ENCODE measurements at regions of chr16 and their contacts with region 1.

Region 1: DNA sequence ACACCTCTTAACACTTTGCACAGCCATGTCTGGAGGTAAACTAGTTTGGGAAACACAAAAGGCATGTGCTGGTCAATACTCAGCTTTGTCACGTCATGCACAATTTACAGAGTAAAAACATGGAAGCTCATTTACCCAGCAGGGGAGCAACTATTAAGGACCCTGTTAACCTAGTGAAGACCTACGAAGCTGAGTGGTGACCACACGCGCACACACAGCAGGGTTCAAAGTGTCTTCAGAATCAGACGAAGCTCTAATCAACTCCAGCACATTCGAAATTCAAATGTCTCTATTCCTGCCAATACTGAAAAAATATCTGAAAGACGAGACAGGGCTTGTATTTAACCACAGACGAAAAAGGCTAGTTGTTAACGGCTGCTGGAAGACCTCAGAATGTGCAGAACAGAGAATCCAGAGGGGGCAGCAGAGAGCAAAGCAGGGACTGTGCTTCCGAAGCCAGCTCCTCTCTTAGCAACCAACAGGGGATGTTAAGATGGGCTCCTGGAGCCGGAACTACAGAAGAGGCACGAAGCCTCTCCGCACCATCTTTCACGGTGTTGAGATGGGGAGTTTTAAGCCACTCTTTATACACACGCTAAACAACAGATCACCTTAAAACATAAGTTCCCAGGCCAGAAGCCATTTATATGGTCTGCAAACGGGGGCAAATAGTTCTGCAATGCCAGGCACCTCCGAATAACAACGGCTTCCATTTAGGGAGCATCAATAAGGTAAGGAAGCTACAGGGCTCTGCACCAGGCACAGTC is 45.7 kb downstream of the CMTM4 start:
- DNase-seq: peak; percentile 83
- H3K4me3 ChIP-seq: peak overlapping the region; percentile 38 to 46
- H3K27ac ChIP-seq: peak overlapping the region in 1 of 2 experiments; percentile 18; a peak in 1 of 4 replicates
- H3K4me1 ChIP-seq: peaks cover 4 to 6% of the 10 kb centered on the region in 2 experiments; a peak in 1 of 4 replicates
- H3K27me3 ChIP-seq: no peaks in the 10 kb centered on the region
- CTCF ChIP-seq: peak; percentile 94
- EP300 ChIP-seq: no peak
- RAD21 ChIP-seq: peak; percentile 71

Region 2: GRCh38 chr16:66608241-66609138 is 42.4 kb before region 1 on chr16:
- CTCF ChIA-PET with region 1: interaction called, 43 read pairs
- POLR2A ChIA-PET with region 1: no interaction called
- DNase-seq: peak; percentile 94
- H3K4me3 ChIP-seq: no peak overlapping the region; a peak in 1 of 4 replicates
- H3K27ac ChIP-seq: peak overlapping the region; percentile 36 to 38; a peak in 3 of 4 replicates
- H3K4me1 ChIP-seq: peaks cover 7 to 19% of the 10 kb centered on the region in 2 experiments; a peak in 3 of 4 replicates
- H3K27me3 ChIP-seq: no peaks in the 10 kb centered on the region
- CTCF ChIP-seq: peak; percentile 94
- EP300 ChIP-seq: no peak
- RAD21 ChIP-seq: peak; percentile 72

Region 3: DNA sequence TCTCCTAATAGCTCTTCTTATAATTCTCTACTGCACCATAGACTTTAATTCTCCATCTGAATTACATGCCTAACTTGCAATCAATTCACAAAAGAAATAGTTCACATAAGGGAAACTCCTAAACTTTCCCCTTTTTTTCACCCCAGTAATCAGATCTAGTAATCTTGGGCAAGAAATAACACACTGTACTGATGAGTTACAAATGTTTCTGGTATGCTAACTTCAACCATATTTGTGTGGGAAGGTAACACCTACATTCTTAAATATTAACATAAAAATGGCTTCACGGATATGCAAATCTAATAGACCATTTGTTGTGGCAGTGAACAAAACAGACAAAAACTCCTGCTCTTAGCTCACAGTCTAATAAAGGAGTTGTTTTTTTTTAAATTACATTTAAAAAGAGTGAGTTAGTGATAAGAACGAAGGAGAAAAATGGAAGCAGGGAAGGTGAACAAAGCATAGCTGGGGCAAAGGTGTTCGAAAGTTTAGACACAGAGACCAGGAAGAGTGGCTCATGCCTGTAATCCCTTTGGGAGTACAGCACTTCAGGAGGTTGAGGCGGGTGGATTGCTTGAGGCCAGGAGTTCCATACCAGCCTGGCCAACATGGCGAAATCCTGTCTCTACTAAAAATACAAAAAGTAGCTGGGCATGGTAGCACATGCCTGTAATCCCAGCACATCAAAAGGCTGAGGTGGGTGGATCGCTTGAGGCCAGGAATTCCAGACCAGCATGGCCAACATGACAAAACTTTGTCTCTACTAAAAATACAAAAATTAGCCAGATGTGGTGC is 11.6 kb before region 1 on chr16:
- CTCF ChIA-PET with region 1: interaction called, 66 read pairs
- POLR2A ChIA-PET with region 1: no interaction called
- DNase-seq: no peak
- H3K4me3 ChIP-seq: no peak overlapping the region
- H3K27ac ChIP-seq: no peak overlapping the region
- H3K4me1 ChIP-seq: no peaks in the 10 kb centered on the region
- H3K27me3 ChIP-seq: no peaks in the 10 kb centered on the region
- CTCF ChIP-seq: no peak
- EP300 ChIP-seq: no peak
- RAD21 ChIP-seq: no peak

Region 4: GRCh38 chr16:66696669-66697630 is 46.1 kb after region 1 on chr16 and contains the start of gene CMTM4:
- CTCF ChIA-PET with region 1: interaction called, 17 read pairs
- POLR2A ChIA-PET with region 1: no interaction called
- DNase-seq: peak; percentile 98
- H3K4me3 ChIP-seq: peak within 1 kb of the TSS; percentile 58 to 85
- H3K27ac ChIP-seq: no peak within 1 kb of the TSS
- H3K4me1 ChIP-seq: peaks cover 6 to 9% of the 10 kb centered on the region in 2 experiments; a peak in 2 of 4 replicates
- H3K27me3 ChIP-seq: no peaks in the 10 kb centered on the region
- CTCF ChIP-seq: peak; percentile 31
- EP300 ChIP-seq: no peak
- RAD21 ChIP-seq: no peak; the same call in 1 of the 2 replicates
- polyA plus RNA-seq, gene CMTM4: 21.7 and 30.8 TPM in 2 replicates

Region 5: DNA sequence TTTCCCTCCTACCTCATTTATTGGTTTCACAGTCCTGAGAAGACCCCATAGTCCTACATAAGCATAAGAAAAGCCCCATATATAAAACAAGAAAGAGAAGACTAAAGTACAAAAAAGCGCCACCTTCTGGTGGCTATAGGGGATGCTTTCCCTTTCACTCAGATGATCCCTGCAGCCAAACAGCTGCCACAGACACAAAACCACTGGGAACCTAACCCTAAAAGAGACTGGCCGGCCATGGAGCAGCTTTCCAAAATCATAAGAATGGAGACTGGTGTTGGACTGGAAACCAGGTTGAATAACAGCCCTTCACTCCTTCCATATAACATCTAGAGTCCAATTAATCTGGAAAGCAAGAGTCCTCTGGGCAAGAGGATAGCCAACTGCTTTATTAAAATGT is 89.1 kb after region 1 on chr16:
- CTCF ChIA-PET with region 1: interaction called, 10 read pairs
- POLR2A ChIA-PET with region 1: no interaction called
- DNase-seq: peak; percentile 69
- H3K4me3 ChIP-seq: peak overlapping the region in 1 of 2 experiments; percentile 12; a peak in 1 of 4 replicates
- H3K27ac ChIP-seq: 0 out of 4 replicates have a peak overlapping the region, but pooled peaks of 1 of the 2 experiments have one; percentile 75
- H3K4me1 ChIP-seq: peaks cover 10 to 15% of the 10 kb centered on the region in 2 experiments; a peak in 3 of 4 replicates
- H3K27me3 ChIP-seq: no peaks in the 10 kb centered on the region
- CTCF ChIP-seq: peak; percentile 82
- EP300 ChIP-seq: no peak
- RAD21 ChIP-seq: peak; percentile 43